ENCODE measurements at regions of chr14 and their contacts with region 1.

Region 1: DNA sequence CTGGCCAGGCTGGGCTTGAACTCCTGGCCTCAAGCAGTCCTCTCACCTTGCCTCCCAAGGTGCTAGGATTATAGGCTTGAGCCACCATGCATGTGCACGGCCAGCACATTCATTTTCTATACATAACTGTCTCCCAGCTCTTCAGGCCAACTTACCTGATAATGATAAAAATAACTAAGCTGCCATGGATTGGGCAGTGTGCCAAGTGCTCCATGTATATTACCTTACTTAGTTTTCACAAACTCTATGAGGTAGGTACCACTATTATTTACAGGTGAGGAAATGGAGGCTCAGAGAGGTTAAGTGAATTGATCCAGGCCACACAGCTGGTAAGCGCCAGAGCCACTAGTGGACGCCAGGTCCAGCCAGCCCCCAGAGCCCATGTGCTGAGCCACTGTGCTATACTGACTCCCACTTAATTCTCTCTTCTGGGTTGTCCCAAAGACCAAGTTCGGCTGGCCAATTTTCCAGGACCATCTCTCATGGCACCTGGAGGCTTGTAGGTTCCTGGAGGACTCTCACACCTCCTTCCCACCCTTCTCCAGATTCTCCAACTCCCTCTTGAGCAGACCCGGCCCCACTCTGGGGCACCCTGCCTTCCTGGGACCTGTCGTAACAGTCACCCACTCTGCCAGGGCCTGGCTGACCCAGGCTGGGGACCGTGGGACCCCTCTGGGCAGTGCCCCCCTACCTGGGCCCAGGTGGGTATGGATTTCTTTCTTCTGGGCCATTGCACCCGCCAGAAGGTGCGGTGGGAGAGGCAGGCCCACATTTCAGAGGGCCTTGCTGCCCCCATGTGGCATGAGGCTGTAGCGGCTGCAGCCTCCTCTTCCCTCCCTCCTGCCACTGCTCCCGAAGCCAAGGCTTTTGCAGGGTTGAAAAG is 30.2 kb upstream of the CIPC start:
- DNase-seq: peak; percentile 80
- ATAC-seq: peak; percentile 74
- H3K4me3 Mint-ChIP-seq: no peak overlapping the region
- H3K27ac Mint-ChIP-seq: no peak overlapping the region
- H3K4me1 Mint-ChIP-seq: no peaks in the 10 kb centered on the region
- H3K27me3 Mint-ChIP-seq: no peaks in the 10 kb centered on the region

Region 2: DNA sequence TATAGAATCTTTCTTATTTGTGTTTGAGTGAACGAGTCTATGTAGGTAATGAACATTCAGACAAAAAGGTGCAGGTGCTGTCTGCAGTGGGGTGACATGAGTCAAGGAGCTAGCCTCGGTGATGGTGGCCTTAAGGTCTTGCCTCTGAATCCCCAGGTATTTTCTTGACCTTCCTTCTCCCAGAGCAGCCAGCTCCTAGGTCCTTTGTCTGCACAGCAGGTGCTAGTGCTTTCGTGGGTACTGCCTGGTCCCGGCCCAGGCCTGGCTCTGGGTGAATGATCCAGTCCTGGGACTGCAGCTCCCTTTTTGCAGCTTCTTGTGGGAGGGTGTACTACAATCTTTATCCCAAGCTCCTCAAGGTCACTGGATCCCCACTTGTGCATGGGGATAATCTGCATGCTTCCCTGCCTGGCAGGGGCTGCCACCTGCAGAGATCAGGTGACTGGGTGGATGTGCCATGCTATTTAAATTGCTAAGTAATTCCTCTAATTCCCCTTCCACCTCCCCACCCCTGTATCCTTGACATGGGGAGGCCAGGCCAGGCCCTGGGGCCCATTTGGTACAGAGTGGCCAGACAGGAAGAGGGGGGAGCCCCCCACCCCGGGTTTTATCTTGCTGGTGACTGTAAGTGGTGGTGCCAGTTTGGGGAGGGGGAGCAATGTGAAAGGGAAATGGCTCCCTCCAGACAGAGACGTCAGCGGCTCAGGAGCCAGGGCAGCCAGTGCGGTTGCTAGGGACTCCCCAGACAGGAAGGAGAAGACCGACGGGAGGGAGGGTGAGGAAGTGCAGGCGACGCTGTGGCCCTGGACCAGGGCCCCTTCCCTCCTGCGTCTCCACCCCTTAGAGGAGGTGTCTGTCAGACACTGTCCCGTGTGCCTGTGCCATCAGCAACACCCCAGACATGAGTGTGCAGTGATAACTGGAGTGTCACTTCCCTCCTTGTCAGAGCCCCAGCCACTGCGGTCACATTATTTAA is 299.9 kb before region 1 on chr14:
- CTCF ChIA-PET with region 1: no interaction called
- POLR2A ChIA-PET with region 1: no interaction called
- intact Hi-C with region 1: no loop called
- DNase-seq: peak; percentile 86
- ATAC-seq: peak; percentile 100
- H3K4me3 Mint-ChIP-seq: peak overlapping the region; percentile 23
- H3K27ac Mint-ChIP-seq: peak overlapping the region; percentile 80
- H3K4me1 Mint-ChIP-seq: peaks cover 17% of the 10 kb centered on the region
- H3K27me3 Mint-ChIP-seq: peaks cover 2% of the 10 kb centered on the region

Region 3: DNA sequence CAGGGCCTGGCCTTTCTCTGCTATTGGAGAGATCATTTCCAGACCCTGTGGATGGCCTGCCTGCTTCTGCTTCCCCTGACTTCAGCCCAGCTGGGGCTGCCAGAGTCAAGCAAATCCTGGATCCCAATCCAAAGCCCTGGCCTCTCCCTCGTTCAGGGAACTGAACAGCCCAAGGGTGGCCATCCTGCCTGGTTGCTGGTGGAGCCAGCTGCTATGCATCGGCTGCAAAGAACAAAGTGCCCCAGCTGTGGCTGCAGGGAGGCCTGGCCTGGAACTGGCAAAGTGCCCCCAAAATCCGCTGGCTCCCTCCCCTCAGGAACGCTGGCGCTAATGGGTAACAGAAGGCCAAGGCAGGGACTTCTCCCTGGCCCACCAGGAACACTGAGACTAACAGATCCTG is 185.2 kb before region 1 on chr14:
- CTCF ChIA-PET with region 1: interaction called, 599 read pairs
- POLR2A ChIA-PET with region 1: no interaction called
- intact Hi-C with region 1: no loop called
- DNase-seq: no peak
- ATAC-seq: no peak
- H3K4me3 Mint-ChIP-seq: no peak overlapping the region
- H3K27ac Mint-ChIP-seq: no peak overlapping the region
- H3K4me1 Mint-ChIP-seq: peaks cover 3% of the 10 kb centered on the region
- H3K27me3 Mint-ChIP-seq: no peaks in the 10 kb centered on the region

Region 4: DNA sequence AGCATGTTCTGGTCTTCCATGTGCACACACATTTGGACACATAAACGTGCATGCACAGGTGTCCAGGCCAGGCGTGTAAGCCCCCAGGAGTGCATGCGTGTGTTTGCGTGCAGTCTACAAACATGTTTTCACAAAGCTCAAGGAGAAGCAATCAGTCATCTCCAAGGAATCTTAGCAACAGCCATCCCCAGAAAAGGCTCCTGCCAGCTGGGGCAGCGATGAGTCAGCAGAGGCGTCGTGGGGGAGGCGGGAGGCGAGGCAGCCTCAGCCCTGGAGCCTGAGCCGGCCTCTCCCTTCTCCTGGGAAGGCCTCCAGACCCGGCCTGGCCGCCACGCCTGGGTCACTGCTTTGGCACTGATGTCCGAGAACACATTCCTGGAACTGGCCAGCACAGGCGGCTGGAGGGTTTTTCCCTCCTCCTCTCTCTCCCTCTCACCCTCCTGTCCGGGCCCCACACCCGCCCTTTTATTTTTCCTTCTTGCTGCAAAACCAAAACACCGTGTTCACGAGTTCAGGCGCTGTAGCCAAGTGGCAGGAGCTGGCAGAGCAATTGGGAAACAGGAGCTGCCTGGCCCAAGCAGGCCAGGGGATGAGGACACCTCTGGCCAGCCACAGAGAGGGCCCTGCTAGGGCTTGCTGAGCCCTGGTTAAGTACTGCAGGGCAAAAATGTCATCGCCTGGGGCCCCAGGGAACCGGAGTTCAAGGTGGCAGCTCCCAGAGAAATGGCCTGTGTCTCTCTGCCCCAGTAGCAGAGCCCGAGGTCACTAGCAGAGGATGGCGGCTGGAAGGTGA is 148.9 kb before region 1 on chr14:
- CTCF ChIA-PET with region 1: interaction called, 37 read pairs
- POLR2A ChIA-PET with region 1: no interaction called
- intact Hi-C with region 1: no loop called
- DNase-seq: peak; percentile 65
- ATAC-seq: no peak
- H3K4me3 Mint-ChIP-seq: no peak overlapping the region
- H3K27ac Mint-ChIP-seq: no peak overlapping the region
- H3K4me1 Mint-ChIP-seq: peaks cover 59% of the 10 kb centered on the region
- H3K27me3 Mint-ChIP-seq: no peaks in the 10 kb centered on the region

Region 5: DNA sequence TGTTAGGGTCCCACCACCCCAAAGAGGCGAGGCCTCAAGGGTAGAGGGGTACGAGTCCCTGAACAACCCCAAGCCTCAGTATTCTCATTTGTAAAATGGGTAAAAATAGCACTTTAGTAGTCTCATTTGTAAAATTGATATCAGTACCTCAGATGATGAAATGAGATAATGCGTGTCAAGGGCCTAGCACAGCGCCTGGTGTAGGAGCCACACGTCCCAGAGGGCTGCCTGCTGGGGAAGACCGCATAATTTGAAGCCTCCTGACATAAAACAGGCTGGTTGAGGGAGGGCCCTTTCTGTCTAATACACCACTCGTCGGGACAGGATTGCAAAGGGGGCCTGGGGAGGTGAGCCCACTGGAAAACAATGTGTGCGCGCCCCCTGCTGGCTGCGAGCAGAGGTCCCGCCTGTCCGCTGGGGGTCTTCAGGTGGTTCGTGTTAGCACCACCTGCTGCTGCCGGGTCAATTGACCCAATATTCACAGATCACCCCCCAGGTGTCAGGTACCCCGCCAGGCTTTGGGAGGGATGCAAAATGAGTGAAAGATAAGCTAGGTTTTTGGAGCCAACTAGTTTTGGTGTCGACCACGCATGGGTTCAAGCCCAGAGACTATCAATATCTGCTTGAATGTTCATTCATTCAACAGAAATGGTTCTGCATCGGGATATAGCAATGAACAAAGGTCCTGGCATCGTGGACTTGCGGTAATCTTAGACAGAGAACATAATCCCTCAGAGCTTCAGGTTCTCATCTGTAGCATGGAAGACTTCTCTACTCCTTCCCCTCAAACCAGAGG is 14.6 kb before region 1 on chr14:
- CTCF ChIA-PET with region 1: interaction called, 40 read pairs
- POLR2A ChIA-PET with region 1: no interaction called
- intact Hi-C with region 1: loop called in 1 of 2 experiments (anchors 1 kb)
- DNase-seq: peak; percentile 90
- ATAC-seq: peak; percentile 86
- H3K4me3 Mint-ChIP-seq: no peak overlapping the region
- H3K27ac Mint-ChIP-seq: peak overlapping the region; percentile 78
- H3K4me1 Mint-ChIP-seq: peaks cover 18% of the 10 kb centered on the region
- H3K27me3 Mint-ChIP-seq: no peaks in the 10 kb centered on the region

Region 6: DNA sequence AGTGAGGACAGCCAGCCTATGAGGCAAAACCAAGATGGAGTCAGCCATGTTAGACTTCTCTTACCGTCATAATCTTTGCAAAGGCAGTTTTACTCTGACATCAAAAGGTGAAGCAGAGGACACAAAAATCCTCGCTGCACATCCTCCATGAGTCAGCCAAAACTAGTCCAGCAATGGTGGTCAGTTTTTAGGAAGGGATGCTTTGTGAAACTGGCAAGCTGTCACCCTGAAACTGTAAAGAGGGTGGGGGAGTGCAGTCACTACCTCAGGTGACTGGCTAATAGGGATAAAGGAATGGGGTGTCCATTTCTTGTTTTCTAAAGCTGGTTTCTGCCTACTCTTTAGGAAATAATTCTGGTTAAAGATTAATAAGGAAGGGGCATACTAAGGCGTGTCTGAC is 24.8 kb after region 1 on chr14:
- CTCF ChIA-PET with region 1: interaction called, 106 read pairs
- POLR2A ChIA-PET with region 1: no interaction called
- intact Hi-C with region 1: loop called (anchors 1 to 2 kb)
- DNase-seq: no peak
- ATAC-seq: no peak
- H3K4me3 Mint-ChIP-seq: no peak overlapping the region
- H3K27ac Mint-ChIP-seq: no peak overlapping the region
- H3K4me1 Mint-ChIP-seq: peaks cover 25% of the 10 kb centered on the region
- H3K27me3 Mint-ChIP-seq: no peaks in the 10 kb centered on the region

Region 7: DNA sequence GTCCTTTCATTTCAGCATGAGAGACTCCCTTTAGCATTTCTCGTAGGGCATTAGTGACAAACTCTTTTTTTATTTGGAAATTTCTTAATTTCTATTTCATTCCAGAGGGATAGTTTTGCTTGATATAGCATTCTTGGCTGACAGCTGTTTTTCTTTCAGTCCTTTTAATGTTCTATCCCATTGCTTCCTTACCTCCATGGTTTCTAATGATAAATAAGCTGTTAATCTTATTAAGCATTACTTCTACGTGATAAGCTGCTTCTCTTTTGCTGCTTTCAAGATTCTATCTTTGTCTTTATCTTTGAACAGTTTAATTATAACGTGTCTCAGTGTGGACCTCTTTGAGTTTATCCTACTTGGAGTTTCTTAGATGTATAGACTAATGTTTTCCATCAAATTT is 102.2 kb after region 1 on chr14:
- CTCF ChIA-PET with region 1: no interaction called
- POLR2A ChIA-PET with region 1: no interaction called
- intact Hi-C with region 1: no loop called
- DNase-seq: no peak
- ATAC-seq: no peak
- H3K4me3 Mint-ChIP-seq: no peak overlapping the region
- H3K27ac Mint-ChIP-seq: no peak overlapping the region
- H3K4me1 Mint-ChIP-seq: no peaks in the 10 kb centered on the region
- H3K27me3 Mint-ChIP-seq: peaks cover 9% of the 10 kb centered on the region